Sigmoid colon (tissue), 7 donors: ENCODE measurements at regions of chr1 and their contacts with region 1.

Region 1: DNA sequence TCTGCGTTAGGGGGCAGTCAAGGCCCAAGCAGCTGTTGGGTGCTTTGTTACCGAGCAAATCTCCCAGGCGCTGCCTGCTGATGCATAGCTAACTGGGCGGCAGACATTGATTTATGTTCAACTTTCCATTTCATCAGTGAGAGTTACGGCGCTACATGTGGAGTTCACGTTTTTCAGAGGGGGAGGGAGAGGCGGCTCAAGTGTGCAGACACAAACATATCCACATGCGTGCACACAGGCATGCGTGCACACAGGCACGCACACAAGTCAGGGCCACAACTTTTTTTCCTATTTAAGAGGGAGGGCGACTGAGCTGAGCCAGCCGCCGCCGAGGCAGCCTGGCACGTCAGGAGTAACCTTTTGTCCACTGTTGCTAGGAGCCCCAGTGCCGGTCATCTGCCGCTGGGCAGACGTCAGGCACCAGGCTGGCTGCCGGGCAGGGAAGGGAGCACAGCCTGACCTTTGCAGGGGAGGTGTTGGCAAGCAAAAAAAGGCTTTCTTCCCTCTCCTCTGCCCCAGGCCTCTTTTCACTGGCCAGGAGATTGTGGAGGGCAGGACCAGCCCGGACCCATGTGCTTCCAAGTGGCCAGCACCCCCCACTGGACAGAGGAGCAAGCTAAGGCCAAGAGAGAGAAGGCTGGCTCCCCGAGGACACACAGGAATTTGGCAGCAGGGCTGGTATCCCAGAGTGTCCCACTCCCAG is 73.3 kb downstream of the MRPL37 start:
- DNase-seq: peak; percentile 96
- H3K4me3 ChIP-seq: peak overlapping the region in 3 of 4 donors; percentile 5 to 22 (median 5)
- H3K27ac ChIP-seq: peak overlapping the region; percentile 88 to 95 (median 92)
- H3K4me1 ChIP-seq: peaks cover 0 to 85% (median 84%) of the 10 kb centered on the region in 4 donors
- H3K27me3 ChIP-seq: no peaks in the 10 kb centered on the region
- CTCF ChIP-seq: peak in 3 of 4 experiments; percentile 20 to 72 (median 62)
- EP300 ChIP-seq: peak in 1 of 4 donors; percentile 78
- POLR2A ChIP-seq: no peak

Region 2: DNA sequence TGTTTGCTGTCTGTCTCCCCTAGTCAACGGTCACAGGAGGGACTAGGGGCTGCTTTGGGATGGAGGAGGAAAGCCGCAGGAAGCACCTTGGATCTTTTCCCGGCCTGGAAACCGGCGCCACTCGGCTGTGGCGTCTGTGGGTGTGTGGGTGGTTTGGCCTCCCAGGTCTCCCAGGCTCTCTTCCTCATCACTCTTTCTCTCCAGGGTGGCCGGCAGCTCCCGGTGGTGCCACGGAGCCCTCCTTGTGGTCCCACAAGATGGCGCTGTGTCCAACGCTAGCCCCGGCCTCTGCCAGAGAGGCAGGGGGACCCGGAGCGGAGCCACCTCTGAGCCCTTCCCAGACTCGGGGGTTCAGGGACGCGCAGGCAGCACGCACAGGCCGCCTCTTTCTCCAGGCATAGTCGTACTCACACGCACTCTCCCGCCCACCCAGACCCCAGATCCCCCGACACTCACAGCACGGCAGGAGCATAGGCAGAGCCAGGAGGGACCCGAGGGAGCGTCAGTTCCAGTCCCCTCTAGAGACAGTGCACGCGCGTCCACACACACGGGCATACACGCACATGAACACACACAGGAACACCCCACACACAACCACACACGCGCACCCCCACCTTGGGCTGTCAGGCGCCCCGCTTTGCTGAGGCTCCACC is 151.6 kb before region 1 on chr1:
- intact Hi-C with region 1: loop called (anchors 10 kb)
- DNase-seq: peak; percentile 90
- H3K4me3 ChIP-seq: peak overlapping the region in 3 of 4 donors; percentile 13 to 34 (median 32)
- H3K27ac ChIP-seq: no peak overlapping the region
- H3K4me1 ChIP-seq: peaks cover 0 to 13% (median 12%) of the 10 kb centered on the region in 4 donors
- H3K27me3 ChIP-seq: no peaks in the 10 kb centered on the region
- CTCF ChIP-seq: peak; percentile 63 to 84 (median 75)
- EP300 ChIP-seq: no peak
- POLR2A ChIP-seq: no peak

Region 3: DNA sequence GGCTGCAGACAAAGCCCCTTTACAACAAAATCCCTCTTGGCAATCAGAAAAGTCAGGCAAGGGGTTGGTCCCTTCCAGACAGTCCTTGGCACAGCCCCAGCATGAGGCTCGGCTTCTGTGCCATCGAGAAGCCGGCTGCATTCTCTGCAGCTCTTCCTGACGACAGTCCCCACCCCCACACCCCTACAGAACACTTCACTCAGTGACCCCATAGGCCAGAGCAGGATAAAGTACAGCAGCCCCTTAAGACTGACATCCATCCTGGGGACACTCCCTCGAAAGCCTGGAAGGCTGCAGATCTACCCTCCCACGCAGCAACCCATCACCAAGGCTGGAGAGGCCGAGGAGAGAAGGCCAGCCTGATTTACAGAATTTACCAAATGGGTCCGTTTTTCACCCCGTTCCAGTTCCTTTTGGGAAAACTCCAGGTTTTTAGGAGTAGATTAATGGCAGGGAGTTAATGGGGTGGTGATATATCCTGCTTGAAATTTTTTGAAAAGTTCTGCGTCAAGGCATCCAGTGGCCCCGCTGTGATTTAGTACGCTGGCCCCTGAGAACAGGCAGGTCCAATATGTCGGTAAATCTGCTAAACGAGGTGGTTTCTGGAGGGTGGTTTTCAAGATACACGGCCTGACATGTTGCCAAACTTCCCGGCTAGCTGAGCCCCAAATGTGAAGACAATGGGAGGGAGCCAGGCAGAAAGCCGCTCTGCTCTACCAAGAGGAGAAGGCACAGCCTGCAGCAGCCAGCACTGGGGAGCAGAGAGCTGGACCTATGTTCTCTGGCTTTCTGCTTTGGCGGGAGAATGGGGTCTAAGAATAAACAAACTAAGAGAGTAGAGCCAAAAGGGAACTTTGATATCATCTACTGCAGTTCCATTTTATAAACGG is 51.3 kb after region 1 on chr1:
- intact Hi-C with region 1: loop called (anchors 5 kb)
- DNase-seq: peak; percentile 87
- H3K4me3 ChIP-seq: no peak overlapping the region
- H3K27ac ChIP-seq: peak overlapping the region; percentile 74 to 83 (median 80)
- H3K4me1 ChIP-seq: peaks cover 0 to 76% (median 71%) of the 10 kb centered on the region in 4 donors
- H3K27me3 ChIP-seq: no peaks in the 10 kb centered on the region
- CTCF ChIP-seq: no peak
- EP300 ChIP-seq: no peak
- POLR2A ChIP-seq: no peak

Region 4: GRCh38 chr1:54384911-54385726 is 111.9 kb after region 1 on chr1:
- intact Hi-C with region 1: loop called (anchors 5 kb)
- DNase-seq: no peak
- H3K4me3 ChIP-seq: no peak overlapping the region
- H3K27ac ChIP-seq: peak overlapping the region; percentile 73 to 85 (median 78)
- H3K4me1 ChIP-seq: peaks cover 0 to 62% (median 53%) of the 10 kb centered on the region in 4 donors
- H3K27me3 ChIP-seq: no peaks in the 10 kb centered on the region
- CTCF ChIP-seq: no peak
- EP300 ChIP-seq: peak in 3 of 4 donors; percentile 11 to 56 (median 52)
- POLR2A ChIP-seq: no peak

Region 5: DNA sequence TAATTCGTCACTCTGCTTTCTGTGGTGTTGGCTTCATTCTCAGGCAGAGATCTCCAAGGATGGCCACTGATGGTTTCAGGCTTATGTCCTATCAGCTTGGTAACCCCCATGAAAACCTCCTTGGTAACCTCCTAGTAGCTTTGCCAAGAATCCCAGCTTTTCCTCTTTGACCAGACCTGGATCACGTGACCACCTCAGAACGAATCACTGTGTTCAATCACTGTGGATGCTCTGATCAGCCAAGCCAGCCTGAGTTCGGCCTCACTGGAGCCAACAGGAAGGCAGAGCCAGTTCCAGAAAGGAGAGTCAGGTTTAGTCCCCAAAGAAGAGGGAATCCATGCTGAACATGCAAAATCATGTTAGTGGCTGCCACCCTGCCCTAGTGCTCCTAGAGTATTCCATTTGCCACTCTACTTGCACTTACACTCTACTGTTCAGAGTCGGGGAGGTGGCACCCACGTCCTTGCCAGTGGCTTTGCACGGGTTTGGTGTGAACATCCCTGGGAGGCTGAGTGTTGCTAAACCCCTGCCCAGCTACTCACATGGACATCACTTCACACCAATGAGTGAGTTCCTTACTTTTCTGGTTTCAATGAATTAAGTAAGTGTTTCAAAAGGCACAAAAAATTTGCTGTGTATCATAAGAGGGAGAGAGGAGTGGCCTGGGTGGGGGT is 166.4 kb after region 1 on chr1:
- intact Hi-C with region 1: no loop called
- DNase-seq: peak; percentile 21
- H3K4me3 ChIP-seq: no peak overlapping the region
- H3K27ac ChIP-seq: no peak overlapping the region
- H3K4me1 ChIP-seq: no peaks in the 10 kb centered on the region
- H3K27me3 ChIP-seq: no peaks in the 10 kb centered on the region
- CTCF ChIP-seq: no peak
- EP300 ChIP-seq: no peak
- POLR2A ChIP-seq: no peak

Region 6: DNA sequence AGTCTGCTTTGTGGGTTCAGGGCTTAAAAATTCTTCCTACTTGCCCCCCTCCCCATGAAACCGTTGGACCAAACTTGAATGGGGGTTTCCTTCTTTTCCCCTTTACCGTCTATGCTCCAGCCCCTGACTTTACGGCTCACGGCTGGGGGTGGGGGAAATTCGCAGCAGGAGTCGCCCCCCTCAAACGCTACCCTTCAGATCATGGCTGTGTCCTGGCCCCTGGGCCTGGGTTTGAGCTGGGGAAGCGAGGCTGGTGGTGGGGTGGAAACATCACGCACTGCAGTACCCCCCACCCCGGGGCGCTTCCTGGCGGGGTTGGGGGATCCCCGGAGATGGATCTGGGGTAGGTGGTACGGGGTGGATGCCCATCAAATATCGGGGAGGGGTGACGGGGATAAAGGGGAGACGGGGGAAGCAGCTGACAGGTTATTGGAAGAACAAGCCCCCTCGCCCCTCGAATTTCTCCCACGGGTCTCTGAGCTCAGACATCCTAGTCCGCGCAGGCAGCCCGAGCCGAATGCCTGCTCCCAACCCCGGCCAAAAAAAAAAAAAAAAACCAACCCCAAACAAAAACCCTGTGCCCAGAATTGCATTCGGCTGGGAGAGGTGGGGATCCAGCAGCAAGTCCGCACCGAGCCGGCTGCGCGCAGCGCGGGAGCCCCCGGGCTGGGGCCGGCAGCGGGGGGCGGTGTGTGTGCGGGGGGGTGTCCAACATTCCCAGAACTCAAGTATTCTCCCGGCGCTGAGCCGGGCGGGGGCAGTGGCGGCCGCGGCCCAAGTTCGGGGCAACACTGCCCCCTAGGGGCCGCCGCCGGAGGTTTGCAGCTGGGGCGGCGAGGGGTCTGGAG is 215.8 kb after region 1 on chr1:
- intact Hi-C with region 1: loop called (anchors 1 kb)
- DNase-seq: peak; percentile 90
- H3K4me3 ChIP-seq: peak overlapping the region; percentile 55 to 59 (median 58)
- H3K27ac ChIP-seq: peak overlapping the region; percentile 91 to 97 (median 97)
- H3K4me1 ChIP-seq: peaks cover 0 to 53% (median 49%) of the 10 kb centered on the region in 4 donors
- H3K27me3 ChIP-seq: no peaks in the 10 kb centered on the region
- CTCF ChIP-seq: peak; percentile 92 to 96 (median 94)
- EP300 ChIP-seq: no peak
- POLR2A ChIP-seq: peak in 1 of 2 donors; percentile 1